B cell (primary cell): ENCODE measurements at regions of chr14 and their contacts with region 1.

Region 1: DNA sequence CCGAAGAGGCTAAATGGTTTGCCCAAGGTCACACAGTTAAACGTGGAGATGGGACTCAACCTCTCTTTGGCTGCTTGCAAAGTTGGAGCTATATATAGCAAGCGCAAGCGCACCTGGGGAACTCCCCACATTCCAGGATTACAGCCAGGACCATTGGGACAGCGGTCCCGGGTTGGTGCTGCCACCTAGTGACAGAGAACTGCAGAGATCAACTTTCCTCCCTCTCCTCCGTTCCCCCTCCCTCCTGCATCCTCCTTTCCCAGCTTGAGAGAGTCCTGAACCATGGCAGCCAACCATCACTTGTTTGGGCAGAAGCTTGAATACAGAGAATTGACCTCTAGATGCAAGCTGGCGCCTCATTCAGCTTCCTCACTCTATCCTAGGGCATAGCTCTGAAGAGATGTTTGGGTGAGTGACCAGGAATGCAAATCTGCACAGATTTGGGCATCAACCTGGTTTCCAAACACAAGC is 17.4 kb upstream of the FLVCR2 start:
- DNase-seq: peak; percentile 65
- ATAC-seq: peak; percentile 66
- H3K4me3 ChIP-seq: no peak overlapping the region
- H3K4me3 Mint-ChIP-seq: no peak overlapping the region
- H3K27ac ChIP-seq: no peak overlapping the region
- H3K27ac Mint-ChIP-seq: no peak overlapping the region
- H3K4me1 ChIP-seq: peaks cover 6 to 8% of the 10 kb centered on the region in 2 donors
- H3K4me1 Mint-ChIP-seq: peaks cover 10% of the 10 kb centered on the region
- H3K27me3 ChIP-seq: no peaks in the 10 kb centered on the region
- H3K27me3 Mint-ChIP-seq: no peaks in the 10 kb centered on the region
- CTCF ChIP-seq: peak; percentile 82

Region 2: GRCh38 chr14:75307700-75308379 is 253.2 kb before region 1 on chr14:
- CTCF ChIA-PET with region 1: interaction called, 100 read pairs
- POLR2A ChIA-PET with region 1: no interaction called
- intact Hi-C with region 1: loop called (anchors 1 kb)
- DNase-seq: peak; percentile 79
- ATAC-seq: peak; percentile 59
- H3K4me3 ChIP-seq: no peak overlapping the region
- H3K4me3 Mint-ChIP-seq: peak overlapping the region; percentile 13
- H3K27ac ChIP-seq: no peak overlapping the region
- H3K27ac Mint-ChIP-seq: no peak overlapping the region
- H3K4me1 ChIP-seq: peaks cover 3 to 18% of the 10 kb centered on the region in 2 donors
- H3K4me1 Mint-ChIP-seq: peaks cover 15% of the 10 kb centered on the region
- H3K27me3 ChIP-seq: no peaks in the 10 kb centered on the region
- H3K27me3 Mint-ChIP-seq: no peaks in the 10 kb centered on the region
- CTCF ChIP-seq: peak; percentile 80

Region 3: GRCh38 chr14:75487155-75487671 is 73.8 kb before region 1 on chr14:
- CTCF ChIA-PET with region 1: interaction called, 65 read pairs
- POLR2A ChIA-PET with region 1: no interaction called
- intact Hi-C with region 1: loop called (anchors 1 kb)
- DNase-seq: no peak
- ATAC-seq: no peak
- H3K4me3 ChIP-seq: no peak overlapping the region
- H3K4me3 Mint-ChIP-seq: no peak overlapping the region
- H3K27ac ChIP-seq: no peak overlapping the region
- H3K27ac Mint-ChIP-seq: peak overlapping the region; percentile 8
- H3K4me1 ChIP-seq: peaks cover 0 to 8% of the 10 kb centered on the region in 2 donors
- H3K4me1 Mint-ChIP-seq: peaks cover 12% of the 10 kb centered on the region
- H3K27me3 ChIP-seq: peaks cover 0 to 11% (median 0%) of the 10 kb centered on the region in 4 experiments
- H3K27me3 Mint-ChIP-seq: no peaks in the 10 kb centered on the region
- CTCF ChIP-seq: no peak

Region 4: DNA sequence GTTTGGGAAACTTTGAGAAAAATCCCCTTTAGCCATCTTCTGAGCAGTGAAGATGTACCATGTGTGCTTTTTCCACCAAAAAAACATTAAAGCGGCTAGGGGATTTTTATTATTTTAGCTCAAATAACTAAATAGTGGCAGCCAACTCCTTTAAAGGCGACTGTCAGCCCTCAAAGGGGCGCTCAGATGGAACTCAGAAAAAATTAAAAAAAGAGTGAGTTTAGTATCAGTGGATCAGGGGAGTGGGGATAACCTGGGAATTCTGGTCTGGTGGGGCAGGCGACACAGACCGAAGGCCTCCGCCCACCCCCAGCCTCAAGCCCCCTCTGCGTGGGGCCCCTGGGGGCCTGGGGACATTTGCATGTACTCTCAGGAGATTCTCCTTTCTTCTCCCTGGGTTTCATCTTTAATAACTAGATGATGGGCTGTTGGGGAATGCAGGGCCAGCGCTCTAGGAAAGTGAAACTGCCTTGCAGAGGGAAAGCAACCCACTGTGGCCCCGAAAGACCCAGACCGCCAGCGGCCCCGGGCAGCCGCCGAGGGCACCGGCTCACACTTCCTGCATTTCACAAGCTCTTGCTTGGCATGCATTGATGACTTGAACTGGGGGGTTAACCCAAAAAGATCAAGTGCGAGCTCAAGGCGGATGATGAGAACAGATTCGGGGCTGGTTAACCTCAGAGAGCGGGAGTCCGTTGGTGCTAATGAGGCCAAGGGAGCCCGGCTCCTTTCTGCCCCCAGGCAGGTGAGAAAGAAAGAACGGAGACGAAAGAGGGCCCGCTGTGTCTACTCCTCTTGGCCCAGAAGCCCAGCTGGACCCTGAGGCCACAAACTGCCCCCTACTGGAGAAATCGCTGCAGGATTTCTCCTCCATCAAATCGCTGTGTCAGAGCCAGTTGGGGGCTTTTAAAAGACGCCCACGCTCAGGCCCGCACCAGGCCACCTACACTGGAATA is 46.0 kb before region 1 on chr14:
- CTCF ChIA-PET with region 1: interaction called, 108 read pairs
- POLR2A ChIA-PET with region 1: no interaction called
- intact Hi-C with region 1: loop called (anchors 1 kb)
- DNase-seq: peak; percentile 78
- ATAC-seq: peak; percentile 54
- H3K4me3 ChIP-seq: peak overlapping the region; percentile 29 to 62 (median 45)
- H3K4me3 Mint-ChIP-seq: peak overlapping the region; percentile 91
- H3K27ac ChIP-seq: peak overlapping the region; percentile 15 to 55
- H3K27ac Mint-ChIP-seq: peak overlapping the region; percentile 95
- H3K4me1 ChIP-seq: peaks cover 29 to 36% of the 10 kb centered on the region in 2 donors
- H3K4me1 Mint-ChIP-seq: peaks cover 47% of the 10 kb centered on the region
- H3K27me3 ChIP-seq: no peaks in the 10 kb centered on the region
- H3K27me3 Mint-ChIP-seq: no peaks in the 10 kb centered on the region
- CTCF ChIP-seq: peak; percentile 74

Region 5: GRCh38 chr14:75542588-75543091 is 18.4 kb before region 1 on chr14:
- CTCF ChIA-PET with region 1: interaction called, 60 read pairs
- POLR2A ChIA-PET with region 1: no interaction called
- intact Hi-C with region 1: no loop called
- DNase-seq: peak; percentile 83
- ATAC-seq: peak; percentile 79
- H3K4me3 ChIP-seq: peak overlapping the region; percentile 7 to 54 (median 34)
- H3K4me3 Mint-ChIP-seq: peak overlapping the region; percentile 78
- H3K27ac ChIP-seq: peak overlapping the region; percentile 61 to 88
- H3K27ac Mint-ChIP-seq: peak overlapping the region; percentile 94
- H3K4me1 ChIP-seq: peaks cover 34 to 52% of the 10 kb centered on the region in 2 donors
- H3K4me1 Mint-ChIP-seq: peaks cover 50% of the 10 kb centered on the region
- H3K27me3 ChIP-seq: no peaks in the 10 kb centered on the region
- H3K27me3 Mint-ChIP-seq: no peaks in the 10 kb centered on the region
- CTCF ChIP-seq: no peak

Region 6: DNA sequence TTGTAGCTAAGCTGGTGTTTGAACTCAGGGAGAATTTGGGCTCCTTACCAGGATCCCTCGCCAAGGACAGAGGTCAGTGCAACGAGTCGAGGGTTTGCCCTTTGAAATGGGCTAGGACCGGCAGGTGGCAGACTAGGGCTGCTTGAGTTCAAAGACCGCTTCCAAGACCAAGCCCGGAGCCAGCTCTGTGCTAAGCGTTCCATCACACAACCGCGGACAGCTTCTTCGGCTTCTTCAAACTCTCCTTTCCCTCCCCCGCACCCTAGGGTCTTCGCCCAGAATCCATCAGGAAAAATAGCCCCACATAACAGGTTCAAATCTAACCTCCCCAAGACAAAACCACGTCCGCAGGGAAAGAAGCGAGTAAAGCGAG is 16.7 kb after region 1 on chr14:
- CTCF ChIA-PET with region 1: interaction called, 16 read pairs
- POLR2A ChIA-PET with region 1: no interaction called
- intact Hi-C with region 1: no loop called
- DNase-seq: peak; percentile 81
- ATAC-seq: peak; percentile 88
- H3K4me3 ChIP-seq: peak overlapping the region; percentile 51 to 83 (median 65)
- H3K4me3 Mint-ChIP-seq: peak overlapping the region; percentile 99
- H3K27ac ChIP-seq: no peak overlapping the region
- H3K27ac Mint-ChIP-seq: peak overlapping the region; percentile 77
- H3K4me1 ChIP-seq: peaks cover 7 to 20% of the 10 kb centered on the region in 2 donors
- H3K4me1 Mint-ChIP-seq: peaks cover 21% of the 10 kb centered on the region
- H3K27me3 ChIP-seq: peaks cover 0 to 15% (median 0%) of the 10 kb centered on the region in 4 experiments
- H3K27me3 Mint-ChIP-seq: no peaks in the 10 kb centered on the region
- CTCF ChIP-seq: peak; percentile 84

Region 7: DNA sequence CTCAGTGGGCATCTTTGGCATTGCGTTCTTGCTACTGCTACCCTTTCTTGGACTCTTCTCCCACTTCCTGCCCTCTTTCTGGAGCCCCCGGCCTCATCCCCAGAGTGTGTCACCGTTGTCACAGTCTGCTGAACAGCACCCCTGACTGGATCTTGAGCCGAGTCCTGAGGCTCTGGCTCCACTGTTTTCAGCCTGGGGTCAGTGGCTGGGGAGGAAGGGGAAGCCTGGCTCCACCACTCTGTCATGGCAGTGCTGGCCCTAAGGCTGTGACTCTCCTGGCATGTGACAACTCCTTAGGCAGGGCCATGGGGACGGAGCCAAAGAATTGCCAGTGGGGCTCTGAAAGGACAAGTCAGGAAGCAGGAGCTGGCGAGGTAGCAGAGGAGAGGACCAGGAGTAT is 81.1 kb after region 1 on chr14:
- CTCF ChIA-PET with region 1: no interaction called
- POLR2A ChIA-PET with region 1: no interaction called
- intact Hi-C with region 1: no loop called
- DNase-seq: no peak
- ATAC-seq: no peak
- H3K4me3 ChIP-seq: no peak overlapping the region
- H3K4me3 Mint-ChIP-seq: no peak overlapping the region
- H3K27ac ChIP-seq: no peak overlapping the region
- H3K27ac Mint-ChIP-seq: no peak overlapping the region
- H3K4me1 ChIP-seq: no peaks in the 10 kb centered on the region
- H3K4me1 Mint-ChIP-seq: no peaks in the 10 kb centered on the region
- H3K27me3 ChIP-seq: no peaks in the 10 kb centered on the region
- H3K27me3 Mint-ChIP-seq: no peaks in the 10 kb centered on the region
- CTCF ChIP-seq: no peak